Posterior vena cava (tissue), 2 donors: ENCODE measurements at regions of chr11 and their contacts with region 1.

Region 1: GRCh38 chr11:80542704-80543103 is 1101.9 kb upstream of the TENM4 start:
- DNase-seq: no peak

Region 2: DNA sequence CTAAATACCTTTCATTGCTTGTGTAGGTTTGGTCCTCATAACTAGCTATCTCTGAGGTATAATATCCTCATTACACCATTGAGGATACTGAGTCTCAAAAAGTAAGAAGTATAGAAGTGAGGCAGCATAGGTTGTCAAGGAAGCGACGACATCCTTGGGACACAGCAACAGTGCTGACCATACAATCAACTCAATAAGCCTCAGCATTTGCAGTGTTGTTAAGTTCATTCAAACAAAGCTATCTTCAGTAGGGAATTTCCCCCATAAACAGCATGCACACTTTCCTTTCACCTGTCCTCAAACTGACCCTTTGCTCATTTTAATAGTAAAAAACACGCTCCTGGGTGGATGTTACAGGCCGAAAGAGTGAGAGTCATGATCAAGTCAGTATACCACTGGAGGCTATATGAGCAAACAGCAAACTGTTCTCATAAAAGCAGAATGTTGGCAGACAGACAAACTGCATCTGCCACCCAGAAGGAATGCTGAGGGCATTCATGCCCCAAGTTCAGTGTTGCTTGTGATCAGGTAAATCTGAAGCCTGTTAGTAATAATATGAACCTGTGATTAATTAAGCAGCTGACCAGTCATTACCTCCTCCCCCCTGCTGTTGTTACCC is 345.7 kb before region 1 on chr11:
- intact Hi-C with region 1: no loop called
- DNase-seq: no peak

Region 3: GRCh38 chr11:80393210-80393609 is 149.5 kb before region 1 on chr11:
- intact Hi-C with region 1: loop called in 1 of 2 experiments (anchors 5 kb)
- DNase-seq: no peak